Naive thymus-derived CD4-positive, alpha-beta T cell (primary cell): ENCODE measurements at regions of chr2 and their contacts with region 1.

Region 1: DNA sequence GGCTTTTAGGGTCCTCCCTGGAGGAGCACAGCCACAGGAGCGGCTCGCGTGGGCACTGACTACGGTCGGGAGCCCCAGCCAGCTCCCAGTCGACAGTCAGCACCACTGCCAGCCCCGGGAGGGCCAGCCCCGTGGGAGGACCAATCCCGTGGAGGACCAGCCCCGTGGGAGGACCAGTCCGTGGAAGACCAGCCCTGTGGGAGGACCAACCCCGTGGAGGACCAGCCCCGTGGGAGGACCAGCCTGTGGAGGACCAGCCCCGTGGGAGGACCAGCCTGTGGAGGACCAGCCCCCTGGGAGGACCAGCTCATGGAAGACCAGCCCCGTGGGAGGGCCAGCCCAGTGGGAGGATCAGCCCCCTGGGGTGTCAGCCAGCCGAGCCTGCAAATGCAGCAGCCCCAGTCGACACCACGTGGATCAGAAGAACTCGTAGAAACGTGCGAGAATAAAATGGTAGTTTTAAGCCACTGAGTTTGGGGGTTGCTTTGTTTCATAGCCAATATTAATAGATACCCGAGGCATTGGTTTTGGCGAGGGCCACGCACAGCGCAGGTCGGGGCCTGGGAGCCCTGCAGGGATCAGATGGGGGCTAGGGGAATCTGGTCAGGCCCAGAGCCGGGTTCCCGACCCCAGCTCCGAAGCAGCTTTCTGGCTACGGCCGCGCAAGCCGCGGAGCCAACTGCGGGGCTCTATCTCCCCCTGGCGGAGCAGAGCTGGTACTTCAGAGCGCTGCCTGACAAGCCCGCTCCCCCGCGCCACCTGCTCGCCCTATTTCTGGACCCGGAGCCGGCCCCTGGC is 73.0 kb downstream of the TEX51 start:
- DNase-seq: peak; percentile 45 to 75 (median 68)
- ATAC-seq: peak; percentile 87
- H3K4me3 ChIP-seq: peak overlapping the region; percentile 63
- H3K4me3 Mint-ChIP-seq: peak overlapping the region; percentile 57 to 84 (median 80)
- H3K27ac ChIP-seq: no peak overlapping the region
- H3K27ac Mint-ChIP-seq: peak overlapping the region in 3 of 9 donors; percentile 7 to 62 (median 27)
- H3K4me1 ChIP-seq: no peaks in the 10 kb centered on the region
- H3K4me1 Mint-ChIP-seq: peaks cover 0 to 5% (median 4%) of the 10 kb centered on the region in 7 donors
- H3K27me3 ChIP-seq: peaks cover 0 to 3% of the 10 kb centered on the region in 2 donors
- H3K27me3 Mint-ChIP-seq: peaks cover 28 to 50% (median 38%) of the 10 kb centered on the region in 5 donors

Region 2: GRCh38 chr2:126227250-126227649 is 744.4 kb before region 1 on chr2:
- CTCF ChIA-PET with region 1: no interaction called
- POLR2A ChIA-PET with region 1: no interaction called
- intact Hi-C with region 1: loop called in 1 of 2 experiments (anchors 5 kb)
- DNase-seq: no peak
- ATAC-seq: no peak
- H3K4me3 ChIP-seq: no peak overlapping the region
- H3K4me3 Mint-ChIP-seq: no peak overlapping the region
- H3K27ac ChIP-seq: no peak overlapping the region
- H3K27ac Mint-ChIP-seq: no peak overlapping the region
- H3K4me1 ChIP-seq: no peaks in the 10 kb centered on the region
- H3K4me1 Mint-ChIP-seq: no peaks in the 10 kb centered on the region
- H3K27me3 ChIP-seq: no peaks in the 10 kb centered on the region
- H3K27me3 Mint-ChIP-seq: peaks cover 0 to 13% (median 2%) of the 10 kb centered on the region in 5 donors

Region 3: GRCh38 chr2:126399001-126399400 is 572.7 kb before region 1 on chr2:
- CTCF ChIA-PET with region 1: no interaction called
- POLR2A ChIA-PET with region 1: no interaction called
- intact Hi-C with region 1: loop called in 1 of 2 experiments (anchors 5 kb)
- DNase-seq: peak in 3 of 9 donors; percentile 4 to 24 (median 13)
- ATAC-seq: no peak
- H3K4me3 ChIP-seq: no peak overlapping the region
- H3K4me3 Mint-ChIP-seq: no peak overlapping the region
- H3K27ac ChIP-seq: no peak overlapping the region
- H3K27ac Mint-ChIP-seq: no peak overlapping the region
- H3K4me1 ChIP-seq: no peaks in the 10 kb centered on the region
- H3K4me1 Mint-ChIP-seq: peaks cover 0 to 1% (median 0%) of the 10 kb centered on the region in 7 donors
- H3K27me3 ChIP-seq: no peaks in the 10 kb centered on the region
- H3K27me3 Mint-ChIP-seq: peaks cover 4 to 21% (median 14%) of the 10 kb centered on the region in 5 donors

Region 4: GRCh38 chr2:126527836-126528507 is 443.7 kb before region 1 on chr2:
- CTCF ChIA-PET with region 1: interaction called, 11 read pairs
- POLR2A ChIA-PET with region 1: no interaction called
- intact Hi-C with region 1: loop called (anchors 1 to 5 kb)
- DNase-seq: peak; percentile 43 to 74 (median 64)
- ATAC-seq: peak; percentile 79
- H3K4me3 ChIP-seq: no peak overlapping the region
- H3K4me3 Mint-ChIP-seq: no peak overlapping the region
- H3K27ac ChIP-seq: no peak overlapping the region
- H3K27ac Mint-ChIP-seq: no peak overlapping the region
- H3K4me1 ChIP-seq: no peaks in the 10 kb centered on the region
- H3K4me1 Mint-ChIP-seq: no peaks in the 10 kb centered on the region
- H3K27me3 ChIP-seq: no peaks in the 10 kb centered on the region
- H3K27me3 Mint-ChIP-seq: peaks cover 0 to 3% (median 0%) of the 10 kb centered on the region in 5 donors

Region 5: DNA sequence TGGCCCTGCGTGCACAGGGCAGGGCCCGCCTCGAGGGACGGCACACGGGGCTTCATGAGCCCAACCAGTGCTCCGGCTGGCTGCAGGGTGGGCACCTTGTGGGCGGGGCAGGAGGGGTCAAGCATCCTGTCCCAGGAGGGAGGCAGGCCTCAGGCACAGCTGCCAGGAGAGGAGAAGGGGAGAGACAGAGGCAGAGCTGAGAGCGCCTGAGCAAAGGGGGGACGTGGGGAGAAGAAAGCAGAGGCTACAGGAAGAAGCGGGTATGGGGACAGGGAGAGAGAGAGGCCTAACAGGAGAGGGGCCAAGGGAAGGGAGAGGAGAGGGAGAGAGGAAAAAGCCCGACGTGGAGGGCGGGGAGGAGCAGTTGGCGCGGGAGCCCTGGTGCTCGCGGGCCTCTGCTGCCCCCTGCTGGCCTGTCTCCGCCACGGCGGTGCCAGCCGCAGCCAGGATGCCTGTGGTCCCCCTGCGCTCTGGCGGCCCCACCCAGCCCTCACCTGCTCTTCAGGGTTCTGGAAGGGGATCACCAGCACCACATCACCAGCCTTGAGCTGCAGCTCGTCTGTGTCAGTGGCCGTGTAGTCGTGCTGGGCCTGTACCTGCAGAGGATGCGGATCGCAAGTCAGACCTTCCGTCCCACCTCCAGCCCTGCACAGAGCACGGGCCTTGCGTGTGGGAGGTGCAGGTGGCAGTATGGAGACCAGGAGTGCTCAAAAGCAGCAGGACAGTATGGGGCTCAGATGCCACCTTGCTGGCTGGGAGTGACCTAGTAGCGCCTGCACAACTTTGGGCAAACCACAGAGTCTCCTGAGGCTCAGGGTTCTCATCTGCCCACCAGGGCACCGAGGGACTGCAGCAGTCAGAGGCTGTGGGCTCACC is 78.5 kb after region 1 on chr2:
- CTCF ChIA-PET with region 1: no interaction called
- POLR2A ChIA-PET with region 1: no interaction called
- intact Hi-C with region 1: loop called in 1 of 2 experiments (anchors 1 kb)
- DNase-seq: peak in 8 of 9 donors; percentile 22 to 73 (median 59)
- ATAC-seq: peak; percentile 73
- H3K4me3 ChIP-seq: no peak overlapping the region
- H3K4me3 Mint-ChIP-seq: no peak overlapping the region
- H3K27ac ChIP-seq: peak overlapping the region; percentile 5
- H3K27ac Mint-ChIP-seq: peak overlapping the region in 1 of 9 donors; percentile 38
- H3K4me1 ChIP-seq: no peaks in the 10 kb centered on the region
- H3K4me1 Mint-ChIP-seq: peaks cover 0 to 4% (median 0%) of the 10 kb centered on the region in 7 donors
- H3K27me3 ChIP-seq: no peaks in the 10 kb centered on the region
- H3K27me3 Mint-ChIP-seq: no peaks in the 10 kb centered on the region